ENCODE measurements at regions of chr19 and their contacts with region 1.

Region 1: GRCh38 chr19:52114691-52115090 is 19.1 kb upstream of the ZNF841 start:
- DNase-seq: no peak
- H3K4me3 ChIP-seq: no peak overlapping the region
- H3K4me3 Mint-ChIP-seq: no peak overlapping the region
- H3K27ac Mint-ChIP-seq: no peak overlapping the region
- H3K4me1 ChIP-seq: no peaks in the 10 kb centered on the region
- H3K4me1 Mint-ChIP-seq: no peaks in the 10 kb centered on the region
- H3K27me3 ChIP-seq: no peaks in the 10 kb centered on the region
- H3K27me3 Mint-ChIP-seq: no peaks in the 10 kb centered on the region
- CTCF ChIP-seq: no peak

Region 2: GRCh38 chr19:51891193-51891747 is 223.4 kb before region 1 on chr19:
- CTCF ChIA-PET with region 1: no interaction called
- POLR2A ChIA-PET with region 1: no interaction called
- intact Hi-C with region 1: no loop called
- DNase-seq: no peak
- H3K4me3 ChIP-seq: no peak overlapping the region
- H3K4me3 Mint-ChIP-seq: no peak overlapping the region
- H3K27ac Mint-ChIP-seq: no peak overlapping the region
- H3K4me1 ChIP-seq: 0 out of 2 replicates have a peak, but pooled peaks cover 3% of the 10 kb centered on the region
- H3K4me1 Mint-ChIP-seq: no peaks in the 10 kb centered on the region
- H3K27me3 ChIP-seq: no peaks in the 10 kb centered on the region
- H3K27me3 Mint-ChIP-seq: no peaks in the 10 kb centered on the region
- CTCF ChIP-seq: no peak

Region 3: DNA sequence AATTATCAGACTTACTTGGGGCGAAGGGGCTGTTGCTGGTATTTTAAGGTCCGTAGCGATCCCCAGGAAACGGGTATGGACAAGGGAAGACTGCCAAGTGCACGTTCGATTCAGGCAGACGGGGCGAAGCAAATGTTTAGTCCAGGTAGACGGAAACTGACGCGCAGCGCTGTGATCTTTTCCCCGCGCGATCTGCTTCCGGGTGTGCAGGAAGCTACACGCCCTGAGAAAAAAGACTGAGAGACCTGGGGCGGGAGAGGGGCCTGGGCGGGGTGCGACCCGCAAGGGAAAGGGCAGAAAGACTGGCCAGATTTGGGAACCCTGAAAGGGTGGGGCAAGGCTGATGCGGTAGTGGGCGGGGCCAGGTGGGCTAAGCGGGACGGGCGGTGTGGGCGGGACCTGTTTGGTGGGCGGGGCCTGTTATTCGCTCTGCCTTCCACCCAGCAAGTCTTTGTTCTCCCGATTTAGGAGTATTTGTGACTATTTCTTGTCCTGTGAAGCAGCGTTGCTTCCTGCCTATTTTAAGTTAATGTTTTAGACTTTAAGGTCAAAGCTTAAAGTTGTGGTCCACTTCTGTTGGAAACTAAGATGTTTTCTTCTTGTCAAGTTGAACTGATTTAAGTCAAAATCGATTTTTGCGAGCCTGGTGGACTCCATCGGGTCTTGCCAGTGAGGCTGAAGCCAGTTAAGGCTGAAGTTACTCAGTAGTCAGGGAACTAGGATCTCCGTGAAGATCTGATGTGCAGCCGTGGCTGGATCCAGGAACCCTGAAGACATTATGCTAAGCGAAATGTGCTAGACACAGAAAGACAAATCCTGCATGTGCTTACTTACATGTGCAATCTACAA is 56.9 kb after region 1 on chr19 and contains the start of gene ZNF836:
- CTCF ChIA-PET with region 1: no interaction called
- POLR2A ChIA-PET with region 1: interaction called, 14 read pairs
- intact Hi-C with region 1: no loop called
- DNase-seq: peak; percentile 85 to 88
- H3K4me3 ChIP-seq: peak within 1 kb of the TSS; percentile 71
- H3K4me3 Mint-ChIP-seq: peak within 1 kb of the TSS; percentile 98
- H3K27ac Mint-ChIP-seq: peak within 1 kb of the TSS; percentile 93
- H3K4me1 ChIP-seq: peaks cover 3% of the 10 kb centered on the region; the same call in 1 of the 2 replicates
- H3K4me1 Mint-ChIP-seq: peaks cover 14% of the 10 kb centered on the region
- H3K27me3 ChIP-seq: no peaks in the 10 kb centered on the region
- H3K27me3 Mint-ChIP-seq: no peaks in the 10 kb centered on the region
- CTCF ChIP-seq: no peak
- total RNA-seq, gene ZNF836: 6.3 and 8.8 TPM in 2 replicates

Measured in Caco-2 (cell line).